Mucosa of descending colon (tissue), 3 donors: ENCODE measurements at regions of chr3 and their contacts with region 1.

Region 1: DNA sequence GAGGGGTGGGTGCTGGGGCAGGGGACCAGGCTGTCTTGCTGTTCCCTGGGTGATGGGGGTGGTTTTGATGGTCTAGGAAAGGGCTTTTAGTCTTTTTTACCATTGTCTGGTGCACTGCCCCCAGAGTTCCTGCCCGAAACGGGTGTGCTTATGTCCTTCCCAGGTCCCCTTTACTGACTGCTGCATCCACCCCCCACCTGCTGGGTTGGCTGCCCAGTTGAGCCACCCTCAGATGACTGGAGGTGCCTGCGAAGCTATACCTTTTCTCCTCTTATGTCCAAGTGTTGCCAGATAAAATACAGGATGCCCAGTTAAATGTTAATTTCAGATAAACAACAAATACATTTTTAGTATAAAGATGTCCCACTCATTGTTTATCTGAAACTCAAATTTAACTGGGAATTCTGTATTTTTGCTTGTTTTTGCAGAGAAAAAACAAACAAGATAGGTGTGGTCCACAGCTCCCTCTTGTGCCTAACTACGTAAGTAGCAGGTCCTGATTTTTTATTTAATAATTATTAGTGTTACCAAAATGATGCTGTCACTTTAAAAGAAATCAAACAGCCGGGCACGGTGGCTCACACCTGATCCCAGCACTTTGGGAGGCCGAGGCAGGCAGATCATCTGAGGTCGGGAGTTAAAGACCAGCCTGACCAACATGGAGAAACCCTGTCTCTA is 6.1 kb upstream of the RPP14 start:
- DNase-seq: no peak
- ATAC-seq: no peak
- H3K4me3 ChIP-seq: no peak overlapping the region
- H3K4me1 ChIP-seq: no peaks in the 10 kb centered on the region
- CTCF ChIP-seq: no peak

Region 2: DNA sequence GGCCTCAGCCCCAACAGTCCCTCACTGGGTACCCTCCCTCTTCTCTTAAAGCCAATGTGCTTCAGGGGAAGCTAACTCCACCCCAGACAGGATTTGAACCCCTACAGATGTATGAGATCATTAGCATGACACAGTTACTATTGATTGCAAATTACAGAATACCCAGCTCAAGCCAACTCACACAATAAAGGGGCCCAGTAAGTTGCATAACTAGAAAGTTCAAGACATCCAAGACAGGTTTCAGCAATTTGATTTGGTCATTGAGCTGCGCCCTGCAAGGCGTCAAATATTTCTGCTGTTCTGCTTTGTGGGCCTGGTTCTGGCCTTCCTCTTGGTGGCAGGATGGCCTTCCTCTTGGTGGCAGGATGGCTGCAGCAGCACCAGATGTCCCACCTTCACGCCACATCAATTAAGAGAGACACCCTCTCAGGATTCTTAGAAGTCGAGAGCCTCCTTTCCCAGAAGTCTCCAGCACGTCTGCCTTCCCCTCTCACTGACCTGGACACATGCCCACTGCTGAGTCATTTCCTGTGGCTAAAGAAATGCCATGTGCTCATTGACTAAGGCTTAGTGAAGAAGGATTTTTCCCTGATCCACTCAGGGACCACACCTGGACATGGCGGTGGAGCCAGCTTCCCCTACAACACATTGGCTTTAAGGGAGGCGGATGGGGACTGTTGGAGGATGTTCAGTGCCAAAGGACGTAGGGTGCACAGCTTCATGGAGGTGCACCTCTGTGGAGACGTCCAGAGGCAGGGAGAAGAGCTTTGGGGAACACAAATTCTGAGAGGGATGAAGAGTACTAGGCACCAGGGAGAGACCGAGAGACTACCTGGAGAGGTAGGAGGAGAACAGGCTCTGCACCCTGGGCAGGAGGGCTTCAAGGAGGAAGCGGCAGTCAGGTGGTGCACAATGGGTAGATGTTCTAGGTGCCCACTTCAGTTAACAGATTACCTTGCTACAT is 138.3 kb before region 1 on chr3:
- intact Hi-C with region 1: no loop called
- DNase-seq: peak in 2 of 3 donors; percentile 58 to 65
- ATAC-seq: peak; percentile 57
- H3K4me3 ChIP-seq: no peak overlapping the region
- H3K4me1 ChIP-seq: peaks cover 4% of the 10 kb centered on the region
- CTCF ChIP-seq: no peak

Region 3: GRCh38 chr3:58188173-58188564 is 111.8 kb before region 1 on chr3:
- intact Hi-C with region 1: loop called (anchors 5 kb)
- DNase-seq: no peak
- ATAC-seq: peak; percentile 10
- H3K4me3 ChIP-seq: no peak overlapping the region
- H3K4me1 ChIP-seq: no peaks in the 10 kb centered on the region
- CTCF ChIP-seq: no peak